ENCODE measurements at regions of chr9 and their contacts with region 1.

Region 1: DNA sequence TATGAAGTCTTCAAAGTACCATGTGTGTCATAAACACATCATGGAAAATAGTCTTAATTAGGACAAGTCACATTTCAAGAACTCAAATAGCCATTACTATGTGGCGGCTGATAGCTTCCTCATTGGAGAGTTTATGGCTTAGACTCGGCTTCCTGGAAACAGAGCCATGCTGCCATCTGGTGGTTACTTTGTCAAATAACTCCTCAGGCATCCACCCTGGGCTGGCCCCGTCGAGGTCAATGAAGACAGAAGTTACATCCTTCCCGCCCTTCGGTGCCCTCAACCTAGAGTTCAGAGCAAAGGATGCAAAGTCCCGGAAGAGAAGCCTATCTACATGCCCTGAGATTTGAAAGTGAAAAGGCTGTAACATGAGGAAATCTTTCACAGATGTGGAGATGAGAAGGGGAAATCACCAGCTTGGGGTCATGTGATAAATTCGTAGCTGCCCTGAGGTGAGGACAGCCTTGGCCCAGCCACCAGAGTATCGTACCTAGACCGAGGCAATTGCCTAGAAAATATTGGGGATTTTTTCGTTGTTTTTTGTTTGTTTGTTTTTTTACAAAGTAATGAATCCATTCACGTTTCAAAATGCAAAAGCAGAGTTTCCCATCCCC is 45.5 kb upstream of the ZNF169 start:
- DNase-seq: peak in 4 of 5 donors; percentile 71 to 91 (median 78)
- H3K4me3 ChIP-seq: no peak overlapping the region
- H3K27ac ChIP-seq: no peak overlapping the region
- H3K4me1 ChIP-seq: no peaks in the 10 kb centered on the region
- H3K27me3 ChIP-seq: no peaks in the 10 kb centered on the region
- CTCF ChIP-seq: peak; percentile 86

Region 2: DNA sequence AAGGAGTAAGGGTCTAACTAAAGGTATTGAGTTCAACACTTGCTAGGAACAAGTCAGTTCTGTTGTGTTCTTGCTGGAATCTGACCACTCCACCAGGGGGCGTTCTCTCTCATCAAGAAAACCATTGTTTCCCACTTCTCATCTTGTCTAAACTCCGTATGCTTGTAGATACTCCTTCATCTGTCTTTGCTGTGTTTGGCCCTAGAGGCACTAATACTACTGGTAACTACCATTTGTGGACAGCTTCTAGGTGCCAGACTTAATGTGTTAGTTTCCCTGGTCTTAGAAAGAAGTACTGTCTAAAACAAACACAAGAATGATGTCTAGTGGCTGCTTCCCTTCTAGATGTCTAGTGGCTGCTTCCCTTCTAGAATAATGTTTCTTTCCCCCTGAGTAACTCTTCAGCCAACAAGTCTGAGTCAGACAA is 148.1 kb before region 1 on chr9:
- intact Hi-C with region 1: loop called (anchors 5 kb)
- DNase-seq: peak in 4 of 5 donors; percentile 73 to 92 (median 80)
- H3K4me3 ChIP-seq: no peak overlapping the region
- H3K27ac ChIP-seq: no peak overlapping the region
- H3K4me1 ChIP-seq: no peaks in the 10 kb centered on the region
- H3K27me3 ChIP-seq: no peaks in the 10 kb centered on the region
- CTCF ChIP-seq: peak; percentile 86